ENCODE measurements at regions of chr9 and their contacts with region 1.

Region 1: DNA sequence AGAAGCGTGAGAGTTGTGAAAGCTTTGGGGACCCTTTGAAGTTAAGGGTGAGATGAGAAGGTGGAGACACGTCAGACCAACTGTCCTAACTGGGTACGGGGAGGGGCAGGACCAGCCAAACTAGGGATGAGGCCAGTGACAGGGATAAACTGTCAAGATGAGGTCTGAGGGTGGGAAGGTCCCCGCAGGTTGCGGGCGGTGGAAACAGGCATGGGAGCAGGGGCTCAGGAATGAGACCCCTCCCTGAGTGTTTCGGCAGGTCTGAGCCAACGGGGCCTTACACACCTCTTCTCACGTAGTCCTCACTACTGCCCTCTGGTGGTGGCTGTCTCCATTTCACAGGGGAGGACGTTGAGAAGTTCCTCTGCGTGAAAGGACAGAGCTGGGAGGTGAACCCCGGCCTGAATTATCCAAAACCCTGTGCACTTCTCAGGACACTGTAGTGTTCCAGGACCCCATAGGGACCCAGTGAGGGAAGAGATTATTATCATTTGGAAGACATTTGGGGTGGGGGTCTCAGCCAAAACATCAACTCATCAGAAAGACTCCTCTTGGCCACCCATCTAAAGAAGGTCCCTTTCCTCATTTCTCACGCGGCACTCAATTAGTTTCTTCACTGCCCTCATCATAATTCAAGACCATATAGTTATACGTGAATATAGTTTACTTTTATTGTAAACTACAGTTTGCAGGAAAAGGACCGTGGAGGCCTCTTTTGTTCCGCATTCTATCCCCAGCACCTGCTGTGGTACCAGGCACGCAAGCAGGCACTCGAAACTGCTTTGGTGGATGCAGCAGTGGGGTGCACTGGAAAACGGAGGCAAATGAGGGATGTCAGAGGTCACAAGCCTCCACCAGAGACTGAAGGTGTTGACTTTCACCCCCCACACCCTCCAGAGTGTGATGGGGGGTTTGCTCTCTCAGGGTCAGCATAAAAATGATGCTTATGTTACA is 21.7 kb upstream of the NANS start:
- DNase-seq: peak; percentile 67 to 93 (median 85)
- ATAC-seq: peak; percentile 89 to 99 (median 96)
- H3K4me3 ChIP-seq: no peak overlapping the region
- H3K27ac ChIP-seq: no peak overlapping the region
- H3K4me1 ChIP-seq: no peaks in the 10 kb centered on the region
- H3K27me3 ChIP-seq: no peaks in the 10 kb centered on the region
- CTCF ChIP-seq: peak; percentile 63 to 84 (median 80)

Region 2: DNA sequence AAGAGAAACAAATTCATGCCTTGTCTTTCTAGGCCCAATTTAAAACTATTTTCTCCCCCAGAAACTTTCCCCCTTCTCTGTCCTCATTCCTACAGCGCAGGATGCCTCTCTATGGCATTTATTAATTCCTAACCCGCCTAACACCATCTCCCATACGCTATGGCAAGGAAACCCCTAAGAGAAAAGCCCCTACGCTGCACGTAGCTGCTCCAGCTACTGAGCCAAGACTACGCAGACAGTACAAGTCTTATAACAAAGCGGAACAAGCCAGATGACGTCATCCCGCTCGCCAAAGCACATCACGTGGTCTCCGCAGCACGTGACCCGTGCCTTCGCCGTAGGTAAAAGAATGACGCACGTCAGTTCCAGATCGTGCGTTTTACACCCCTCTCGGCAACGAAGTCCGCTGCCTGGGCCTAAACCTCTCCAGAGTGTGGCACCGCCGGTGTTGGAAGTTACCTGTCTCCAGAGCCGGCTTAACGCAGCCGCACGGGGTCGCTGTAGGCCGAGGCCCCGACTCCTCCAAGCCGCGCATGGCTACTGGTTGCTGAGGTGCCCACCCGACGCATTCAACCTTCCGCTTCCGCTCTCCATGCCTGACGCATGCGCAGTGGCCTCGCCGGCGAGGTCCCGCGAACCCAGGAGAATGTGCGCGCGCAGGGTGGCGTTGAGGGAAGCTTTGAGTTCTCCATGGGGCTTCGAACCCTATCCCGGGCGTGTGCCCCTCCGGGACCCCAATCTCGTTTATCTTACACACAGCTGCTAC is 112.7 kb before region 1 on chr9 and contains the start of gene TRMO:
- intact Hi-C with region 1: loop called in 1 of 3 experiments (anchors 10 kb)
- DNase-seq: peak; percentile 96 to 100 (median 98)
- ATAC-seq: peak; percentile 90 to 95 (median 94)
- H3K4me3 ChIP-seq: peak within 1 kb of the TSS; percentile 35 to 61 (median 46)
- H3K27ac ChIP-seq: peak within 1 kb of the TSS; percentile 99 to 100 (median 100)
- H3K4me1 ChIP-seq: peaks cover 5 to 12% (median 12%) of the 10 kb centered on the region in 3 donors
- H3K27me3 ChIP-seq: no peaks in the 10 kb centered on the region
- CTCF ChIP-seq: peak in 3 of 4 donors; percentile 26 to 39 (median 34)
- total RNA-seq, gene TRMO: 5.2 to 8.7 (median 6.5) TPM

Region 3: GRCh38 chr9:97938081-97938644 is 96.7 kb before region 1 on chr9 and contains the start of gene HEMGN:
- intact Hi-C with region 1: loop called in 1 of 3 experiments (anchors 10 kb)
- DNase-seq: no peak
- ATAC-seq: peak in 1 of 4 donors; percentile 53
- H3K4me3 ChIP-seq: no peak within 1 kb of the TSS
- H3K27ac ChIP-seq: no peak within 1 kb of the TSS
- H3K4me1 ChIP-seq: no peaks in the 10 kb centered on the region
- H3K27me3 ChIP-seq: peaks cover 0 to 4% (median 2%) of the 10 kb centered on the region in 4 donors
- CTCF ChIP-seq: no peak
- total RNA-seq, gene HEMGN: 0.09 TPM in 1 of 6 donors, not detected in the others

Measured in pancreas (tissue), 10 donors.